ENCODE measurements at regions of chr1 and their contacts with region 1.

Region 1: DNA sequence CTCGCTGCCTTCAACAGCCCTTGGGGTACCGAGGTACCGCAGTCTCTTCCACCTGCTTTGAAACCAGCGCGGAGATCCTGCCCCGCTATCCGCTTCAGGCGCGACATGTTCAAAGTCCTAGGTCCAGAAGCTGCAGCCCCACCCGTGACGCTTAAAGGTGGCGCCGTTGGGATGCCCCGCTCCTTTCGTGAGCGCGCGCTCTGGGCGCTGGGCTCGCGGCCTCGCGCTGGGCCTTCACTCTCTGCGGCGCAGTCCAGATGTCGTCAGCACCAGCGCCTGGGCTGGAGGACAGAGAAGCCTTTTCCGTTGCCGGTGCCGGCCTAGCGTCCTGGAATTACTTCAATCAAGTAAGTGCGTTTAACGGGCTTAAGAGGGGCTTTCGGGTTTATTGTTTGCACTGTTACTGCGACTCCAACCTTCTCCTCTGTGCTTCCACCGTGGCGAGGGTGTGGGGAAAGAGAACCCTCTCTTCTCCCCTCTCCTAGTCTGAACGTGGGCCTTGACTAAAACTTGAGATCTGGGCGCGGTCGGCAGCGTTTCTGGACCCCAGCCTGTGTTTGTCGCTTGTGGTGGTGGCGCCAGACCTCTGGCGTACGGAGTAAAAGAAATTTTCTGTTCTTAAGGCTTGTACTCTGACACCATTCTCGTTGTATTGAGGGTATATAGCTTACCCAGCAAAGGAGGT is at the start of gene LRRC40:
- DNase-seq: peak; percentile 98
- ATAC-seq: peak; percentile 98
- H3K4me3 Mint-ChIP-seq: peak within 1 kb of the TSS; percentile 91
- H3K27ac Mint-ChIP-seq: peak within 1 kb of the TSS; percentile 100
- H3K4me1 Mint-ChIP-seq: peaks cover 63% of the 10 kb centered on the region
- H3K27me3 Mint-ChIP-seq: no peaks in the 10 kb centered on the region
- total RNA-seq, gene LRRC40: 17.9 to 20.9 TPM

Region 2: GRCh38 chr1:70221241-70222121 is 15.9 kb after region 1 on chr1 and contains the start of gene SRSF11:
- CTCF ChIA-PET with region 1: interaction called, 18 read pairs
- DNase-seq: peak; percentile 97
- ATAC-seq: peak; percentile 96
- H3K4me3 Mint-ChIP-seq: peak within 1 kb of the TSS; percentile 88
- H3K27ac Mint-ChIP-seq: peak within 1 kb of the TSS; percentile 94
- H3K4me1 Mint-ChIP-seq: peaks cover 44% of the 10 kb centered on the region
- H3K27me3 Mint-ChIP-seq: no peaks in the 10 kb centered on the region
- total RNA-seq, gene SRSF11: 190 to 196 TPM

Measured in activated CD8-positive, alpha-beta memory T cell treated with anti-CD3 and anti-CD28 coated beads, Interleukin-2, amount 10 ng/mL, durations not matched to agents 7 days and 5 days (primary cell).